GM12878 (cell line): ENCODE measurements at regions of chr10 and their contacts with region 1.

Region 1: DNA sequence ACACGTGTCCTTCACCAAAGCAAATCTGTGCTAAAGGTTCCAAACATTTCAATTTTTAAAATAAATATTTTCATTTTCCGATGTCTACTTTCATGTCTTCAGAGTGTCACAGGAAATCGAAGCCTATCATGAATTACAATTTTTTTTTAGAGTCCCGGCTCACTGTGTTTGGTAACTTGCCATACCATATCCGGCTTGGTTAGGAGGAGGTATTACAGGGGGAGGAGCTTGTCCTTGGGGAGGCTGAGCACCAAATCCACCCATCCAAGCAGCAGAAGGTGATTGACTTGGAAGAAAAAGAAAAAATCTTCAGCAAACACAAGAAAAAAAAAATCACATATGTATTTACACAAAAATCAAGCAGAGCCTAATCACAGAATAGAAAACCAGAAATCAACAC is 21.3 kb downstream of the TIAL1 start:
- DNase-seq: no peak
- ATAC-seq: no peak
- H3K4me3 ChIP-seq: no peak overlapping the region
- H3K27ac ChIP-seq: no peak overlapping the region
- H3K4me1 ChIP-seq: no peaks in the 10 kb centered on the region
- H3K27me3 ChIP-seq: no peaks in the 10 kb centered on the region
- CTCF ChIP-seq: no peak
- EP300 ChIP-seq: no peak
- POLR2A ChIP-seq: no peak
- RAD21 ChIP-seq: no peak

Region 2: DNA sequence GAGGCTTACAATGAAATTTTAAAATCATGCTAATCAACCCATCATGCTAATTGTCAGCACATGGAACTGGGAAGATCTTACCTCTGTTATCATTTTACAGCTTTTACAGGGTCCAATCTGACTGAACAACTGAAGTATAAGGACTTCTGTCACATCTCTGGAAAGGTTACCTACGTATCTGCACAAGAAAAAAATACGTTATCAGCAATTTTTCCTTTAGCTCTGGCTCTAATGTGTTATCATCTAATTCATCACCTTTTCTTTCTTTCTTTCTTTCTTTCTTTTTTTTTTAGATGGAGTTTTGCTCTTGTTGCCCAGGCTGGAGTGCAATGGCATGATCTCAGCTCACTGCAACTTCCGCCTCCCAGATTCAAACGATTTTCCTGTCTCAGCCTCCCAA is 12.6 kb after region 1 on chr10:
- CTCF ChIA-PET with region 1: interaction called, 9 read pairs
- POLR2A ChIA-PET with region 1: interaction called, 4 read pairs
- RAD21 ChIA-PET with region 1: interaction called, 3 read pairs
- SMC1A ChIA-PET with region 1: interaction called, 10 read pairs
- in situ Hi-C with region 1: no loop called
- intact Hi-C with region 1: no loop called
- DNase-seq: no peak
- ATAC-seq: no peak
- H3K4me3 ChIP-seq: no peak overlapping the region
- H3K27ac ChIP-seq: no peak overlapping the region
- H3K4me1 ChIP-seq: no peaks in the 10 kb centered on the region; the same call in 1 of the 2 replicates
- H3K27me3 ChIP-seq: no peaks in the 10 kb centered on the region
- CTCF ChIP-seq: no peak
- EP300 ChIP-seq: no peak
- POLR2A ChIP-seq: no peak
- RAD21 ChIP-seq: no peak

Region 3: GRCh38 chr10:119602241-119603095 is 27.0 kb after region 1 on chr10:
- CTCF ChIA-PET with region 1: interaction called, 10 read pairs
- POLR2A ChIA-PET with region 1: no interaction called
- RAD21 ChIA-PET with region 1: no interaction called
- SMC1A ChIA-PET with region 1: interaction called, 6 read pairs
- in situ Hi-C with region 1: no loop called
- intact Hi-C with region 1: no loop called
- DNase-seq: no peak
- ATAC-seq: peak; percentile 73
- H3K4me3 ChIP-seq: no peak overlapping the region
- H3K27ac ChIP-seq: no peak overlapping the region
- H3K4me1 ChIP-seq: peaks cover 7% of the 10 kb centered on the region; the same call in 1 of the 2 replicates
- H3K27me3 ChIP-seq: no peaks in the 10 kb centered on the region
- CTCF ChIP-seq: peak; percentile 65 to 79 (median 69)
- EP300 ChIP-seq: no peak
- POLR2A ChIP-seq: no peak
- RAD21 ChIP-seq: peak; percentile 44